ENCODE measurements at regions of chr22 and their contacts with region 1.

Region 1: GRCh38 chr22:28772633-28773460 is at the start of gene CCDC117:
- DNase-seq: peak; percentile 85 to 97 (median 91)
- ATAC-seq: peak; percentile 97
- H3K4me3 ChIP-seq: peak within 1 kb of the TSS; percentile 83
- H3K4me3 Mint-ChIP-seq: peak within 1 kb of the TSS; percentile 95
- H3K27ac ChIP-seq: peak within 1 kb of the TSS; percentile 61 to 73
- H3K27ac Mint-ChIP-seq: peak within 1 kb of the TSS; percentile 88
- H3K4me1 ChIP-seq: peaks cover 34% of the 10 kb centered on the region
- H3K4me1 Mint-ChIP-seq: peaks cover 27% of the 10 kb centered on the region
- H3K27me3 ChIP-seq: no peaks in the 10 kb centered on the region
- H3K27me3 Mint-ChIP-seq: no peaks in the 10 kb centered on the region
- CTCF ChIP-seq: no peak
- total RNA-seq, gene CCDC117: 14.2 to 16.1 TPM

Region 2: GRCh38 chr22:28600546-28601143 is 172.2 kb before region 1 on chr22:
- CTCF ChIA-PET with region 1: no interaction called
- POLR2A ChIA-PET with region 1: no interaction called
- intact Hi-C with region 1: no loop called
- DNase-seq: peak in 4 of 14 experiments; percentile 11 to 70 (median 66)
- ATAC-seq: no peak
- H3K4me3 ChIP-seq: no peak overlapping the region
- H3K4me3 Mint-ChIP-seq: no peak overlapping the region
- H3K27ac ChIP-seq: no peak overlapping the region
- H3K27ac Mint-ChIP-seq: no peak overlapping the region
- H3K4me1 ChIP-seq: no peaks in the 10 kb centered on the region
- H3K4me1 Mint-ChIP-seq: no peaks in the 10 kb centered on the region
- H3K27me3 ChIP-seq: peaks cover 0 to 12% of the 10 kb centered on the region in 2 experiments
- H3K27me3 Mint-ChIP-seq: peaks cover 46% of the 10 kb centered on the region
- CTCF ChIP-seq: peak; percentile 82

Region 3: DNA sequence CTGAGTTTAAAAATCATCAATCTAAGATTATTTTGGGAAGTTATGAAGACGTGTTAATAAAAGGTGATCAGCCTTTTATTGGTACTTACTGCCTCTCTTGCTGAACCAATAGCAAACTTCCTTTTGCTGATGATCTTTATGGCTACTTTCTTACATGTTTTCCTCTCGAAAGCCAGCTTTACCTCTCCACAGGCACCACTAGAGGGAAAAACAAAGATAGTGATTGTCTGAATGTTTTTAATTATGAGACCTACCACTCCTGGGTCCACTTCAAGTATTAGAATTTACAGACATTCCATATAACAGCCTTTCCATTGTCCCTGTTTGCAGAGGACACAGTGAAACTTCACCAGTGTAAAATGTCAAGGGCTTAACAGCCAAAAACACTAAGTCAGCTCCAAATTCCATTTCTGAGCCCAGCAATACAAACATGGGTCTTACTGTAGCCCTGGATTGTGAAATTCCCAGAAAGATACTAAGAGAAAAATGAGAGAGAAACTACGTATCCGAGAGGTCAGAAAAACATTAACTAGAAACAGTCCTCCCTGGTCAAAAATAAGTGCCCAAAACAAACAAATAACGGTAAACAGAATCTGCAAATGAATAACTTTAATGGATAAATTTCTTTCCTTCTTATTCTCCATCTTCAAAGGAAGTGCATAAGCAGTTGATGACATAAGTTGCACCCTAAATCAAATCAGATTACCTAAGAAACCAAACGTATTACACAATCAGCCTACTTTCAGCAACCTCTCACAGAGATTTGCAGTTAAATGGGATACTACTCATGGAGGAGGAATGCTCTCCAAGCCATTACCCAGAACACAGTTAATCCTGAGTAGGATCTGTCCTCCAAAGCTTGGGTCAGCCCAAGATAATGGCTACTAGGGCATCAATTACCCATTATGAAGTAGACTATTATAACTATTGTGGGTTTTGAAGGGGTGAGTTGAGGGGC is 60.7 kb before region 1 on chr22:
- CTCF ChIA-PET with region 1: no interaction called
- POLR2A ChIA-PET with region 1: no interaction called
- intact Hi-C with region 1: no loop called
- DNase-seq: no peak
- ATAC-seq: no peak
- H3K4me3 ChIP-seq: no peak overlapping the region
- H3K4me3 Mint-ChIP-seq: no peak overlapping the region
- H3K27ac ChIP-seq: no peak overlapping the region
- H3K27ac Mint-ChIP-seq: no peak overlapping the region
- H3K4me1 ChIP-seq: no peaks in the 10 kb centered on the region
- H3K4me1 Mint-ChIP-seq: no peaks in the 10 kb centered on the region
- H3K27me3 ChIP-seq: no peaks in the 10 kb centered on the region
- H3K27me3 Mint-ChIP-seq: no peaks in the 10 kb centered on the region
- CTCF ChIP-seq: no peak

Region 4: GRCh38 chr22:28810821-28811491 is 38.1 kb after region 1 on chr22:
- CTCF ChIA-PET with region 1: interaction called, 3 read pairs
- POLR2A ChIA-PET with region 1: interaction called, 12 read pairs
- intact Hi-C with region 1: no loop called
- DNase-seq: peak in 6 of 14 experiments; percentile 20 to 85 (median 52)
- ATAC-seq: peak; percentile 68
- H3K4me3 ChIP-seq: peak overlapping the region; percentile 43
- H3K4me3 Mint-ChIP-seq: peak overlapping the region; percentile 69
- H3K27ac ChIP-seq: peak overlapping the region; percentile 48 to 59
- H3K27ac Mint-ChIP-seq: peak overlapping the region; percentile 81
- H3K4me1 ChIP-seq: peaks cover 65% of the 10 kb centered on the region
- H3K4me1 Mint-ChIP-seq: peaks cover 72% of the 10 kb centered on the region
- H3K27me3 ChIP-seq: no peaks in the 10 kb centered on the region
- H3K27me3 Mint-ChIP-seq: no peaks in the 10 kb centered on the region
- CTCF ChIP-seq: no peak

Region 5: GRCh38 chr22:28817919-28818909 is 45.4 kb after region 1 on chr22:
- CTCF ChIA-PET with region 1: interaction called, 4 read pairs
- POLR2A ChIA-PET with region 1: interaction called, 7 read pairs
- intact Hi-C with region 1: loop called in 1 of 2 experiments (anchors 2 kb)
- DNase-seq: peak in 2 of 14 experiments; percentile 26 to 45
- ATAC-seq: no peak
- H3K4me3 ChIP-seq: no peak overlapping the region
- H3K4me3 Mint-ChIP-seq: peak overlapping the region; percentile 23
- H3K27ac ChIP-seq: no peak overlapping the region
- H3K27ac Mint-ChIP-seq: no peak overlapping the region
- H3K4me1 ChIP-seq: peaks cover 63% of the 10 kb centered on the region
- H3K4me1 Mint-ChIP-seq: peaks cover 63% of the 10 kb centered on the region
- H3K27me3 ChIP-seq: no peaks in the 10 kb centered on the region
- H3K27me3 Mint-ChIP-seq: no peaks in the 10 kb centered on the region
- CTCF ChIP-seq: no peak

Region 6: GRCh38 chr22:28873183-28873963 is 100.5 kb after region 1 on chr22:
- CTCF ChIA-PET with region 1: no interaction called
- POLR2A ChIA-PET with region 1: no interaction called
- intact Hi-C with region 1: no loop called
- DNase-seq: no peak
- ATAC-seq: no peak
- H3K4me3 ChIP-seq: no peak overlapping the region
- H3K4me3 Mint-ChIP-seq: no peak overlapping the region
- H3K27ac ChIP-seq: no peak overlapping the region
- H3K27ac Mint-ChIP-seq: no peak overlapping the region
- H3K4me1 ChIP-seq: no peaks in the 10 kb centered on the region
- H3K4me1 Mint-ChIP-seq: no peaks in the 10 kb centered on the region
- H3K27me3 ChIP-seq: no peaks in the 10 kb centered on the region
- H3K27me3 Mint-ChIP-seq: no peaks in the 10 kb centered on the region
- CTCF ChIP-seq: no peak

Region 7: GRCh38 chr22:29016067-29016938 is 243.5 kb after region 1 on chr22:
- CTCF ChIA-PET with region 1: no interaction called
- POLR2A ChIA-PET with region 1: no interaction called
- intact Hi-C with region 1: no loop called
- DNase-seq: no peak
- ATAC-seq: no peak
- H3K4me3 ChIP-seq: no peak overlapping the region
- H3K4me3 Mint-ChIP-seq: no peak overlapping the region
- H3K27ac ChIP-seq: no peak overlapping the region
- H3K27ac Mint-ChIP-seq: no peak overlapping the region
- H3K4me1 ChIP-seq: peaks cover 3% of the 10 kb centered on the region
- H3K4me1 Mint-ChIP-seq: no peaks in the 10 kb centered on the region
- H3K27me3 ChIP-seq: peaks cover 0 to 9% of the 10 kb centered on the region in 2 experiments
- H3K27me3 Mint-ChIP-seq: peaks cover 36% of the 10 kb centered on the region
- CTCF ChIP-seq: no peak